H1 (cell line): ENCODE measurements at regions of chr7 and their contacts with region 1.

Region 1: DNA sequence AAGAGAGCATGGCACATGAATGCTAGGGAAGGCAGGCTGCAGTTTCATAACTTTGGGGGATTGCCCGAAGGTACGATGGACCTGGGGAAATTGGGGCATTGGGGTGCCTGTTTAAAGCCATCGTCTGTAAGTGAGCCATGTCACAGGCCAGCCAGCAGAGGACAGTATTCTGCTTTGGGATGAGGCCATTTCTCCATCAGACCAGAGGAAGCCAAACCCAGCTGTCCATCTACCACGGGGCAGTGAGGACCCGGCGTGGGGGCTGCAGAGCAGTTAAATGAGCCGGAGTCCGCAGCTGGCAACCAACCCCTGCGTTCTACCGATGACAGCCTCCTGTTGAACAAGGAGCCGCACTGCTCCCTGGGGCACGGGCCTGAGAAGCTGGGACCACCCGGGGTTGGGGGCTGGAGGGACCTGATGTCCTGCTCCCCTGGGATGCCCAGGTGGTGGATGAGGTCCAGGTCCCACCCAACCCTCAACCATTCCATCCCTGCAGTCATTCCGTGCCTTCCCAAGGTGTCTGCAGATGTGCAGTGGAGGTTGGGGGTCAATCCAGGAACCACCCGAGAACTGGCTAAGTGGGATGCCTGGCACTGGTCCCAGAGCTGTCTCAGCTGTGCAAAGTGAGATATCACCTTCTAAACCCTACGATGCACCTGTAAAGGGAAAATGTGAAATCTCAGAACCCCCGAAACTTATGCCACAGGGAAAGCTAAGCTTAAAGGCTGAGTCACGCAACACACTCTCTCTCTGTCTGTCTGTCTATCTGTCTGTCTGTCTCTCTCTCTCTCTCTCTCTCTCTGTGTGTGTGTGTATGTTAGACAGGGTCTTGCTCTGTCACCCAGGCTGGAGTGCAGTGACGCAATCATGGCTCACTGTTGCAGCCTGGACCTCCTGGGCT is 12.1 kb upstream of the RHBDD2 start:
- DNase-seq: peak in 1 of 2 experiments; percentile 71
- H3K4me3 ChIP-seq: no peak overlapping the region
- H3K27ac ChIP-seq: no peak overlapping the region
- H3K4me1 ChIP-seq: peaks cover 0 to 3% (median 2%) of the 10 kb centered on the region in 4 experiments; a peak in 3 of 7 replicates
- H3K27me3 ChIP-seq: no peaks in the 10 kb centered on the region
- CTCF ChIP-seq: peak; percentile 94 to 99 (median 95)
- EP300 ChIP-seq: no peak
- POLR2A ChIP-seq: no peak
- RAD21 ChIP-seq: peak; percentile 96 to 98

Region 2: DNA sequence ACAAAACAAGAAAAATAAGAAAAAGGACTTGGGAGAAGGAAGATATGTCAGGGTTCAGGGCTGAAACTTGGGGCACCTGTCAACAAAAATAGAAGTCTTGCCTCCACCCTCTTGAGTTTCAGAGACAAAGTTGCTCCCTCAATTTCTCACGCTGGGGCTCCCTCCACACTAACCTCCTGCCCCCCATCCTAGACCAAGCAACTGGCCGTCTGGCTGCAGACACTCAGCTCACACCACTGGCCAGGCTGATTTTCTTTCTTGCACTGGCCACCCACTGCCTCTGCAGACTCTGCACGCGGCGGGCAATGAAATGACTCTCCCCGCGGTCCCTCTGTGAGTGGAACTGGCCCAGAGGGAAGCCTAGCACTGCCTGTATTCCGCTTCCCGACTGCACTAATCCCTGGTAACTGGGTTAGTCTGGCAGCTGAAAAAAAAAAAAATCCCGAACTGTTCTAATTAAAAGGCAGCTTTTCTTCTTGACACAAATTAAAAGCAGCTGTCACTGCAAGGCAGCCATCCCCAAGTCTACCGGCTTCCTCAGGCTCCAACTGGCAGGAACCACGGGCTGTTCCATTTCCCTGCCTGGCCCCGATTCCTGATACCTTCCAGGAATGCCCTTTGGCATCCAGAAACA is 291.1 kb before region 1 on chr7:
- CTCF ChIA-PET with region 1: no interaction called
- POLR2A ChIA-PET with region 1: no interaction called
- DNase-seq: no peak
- H3K4me3 ChIP-seq: no peak overlapping the region
- H3K27ac ChIP-seq: no peak overlapping the region
- H3K4me1 ChIP-seq: no peaks in the 10 kb centered on the region
- H3K27me3 ChIP-seq: no peaks in the 10 kb centered on the region
- CTCF ChIP-seq: no peak
- EP300 ChIP-seq: no peak
- POLR2A ChIP-seq: no peak
- RAD21 ChIP-seq: no peak

Region 3: DNA sequence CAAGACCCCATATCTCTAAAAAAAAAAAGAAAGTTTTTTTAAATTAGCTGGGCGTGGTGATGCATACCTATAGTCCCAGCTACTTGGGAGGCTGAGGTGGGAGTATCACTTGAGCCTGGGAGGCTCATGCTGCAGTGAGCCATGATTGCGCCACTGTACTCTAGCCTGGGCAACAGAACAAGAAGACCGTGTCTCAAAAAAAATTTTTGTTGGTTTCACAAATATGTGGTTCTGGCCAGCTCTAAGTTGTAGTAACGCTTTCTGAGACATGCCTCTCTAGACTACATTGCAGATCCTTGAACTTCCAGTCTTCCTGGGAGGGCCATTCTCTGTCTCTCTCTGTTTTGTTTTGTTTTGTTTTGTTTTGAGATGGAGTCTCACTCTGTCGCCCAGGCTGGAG is 12.5 kb before region 1 on chr7:
- CTCF ChIA-PET with region 1: interaction called, 16 read pairs
- POLR2A ChIA-PET with region 1: interaction called, 3 read pairs
- DNase-seq: no peak
- H3K4me3 ChIP-seq: no peak overlapping the region
- H3K27ac ChIP-seq: no peak overlapping the region
- H3K4me1 ChIP-seq: no peaks in the 10 kb centered on the region
- H3K27me3 ChIP-seq: no peaks in the 10 kb centered on the region
- CTCF ChIP-seq: no peak
- EP300 ChIP-seq: no peak
- POLR2A ChIP-seq: no peak
- RAD21 ChIP-seq: no peak

Region 4: DNA sequence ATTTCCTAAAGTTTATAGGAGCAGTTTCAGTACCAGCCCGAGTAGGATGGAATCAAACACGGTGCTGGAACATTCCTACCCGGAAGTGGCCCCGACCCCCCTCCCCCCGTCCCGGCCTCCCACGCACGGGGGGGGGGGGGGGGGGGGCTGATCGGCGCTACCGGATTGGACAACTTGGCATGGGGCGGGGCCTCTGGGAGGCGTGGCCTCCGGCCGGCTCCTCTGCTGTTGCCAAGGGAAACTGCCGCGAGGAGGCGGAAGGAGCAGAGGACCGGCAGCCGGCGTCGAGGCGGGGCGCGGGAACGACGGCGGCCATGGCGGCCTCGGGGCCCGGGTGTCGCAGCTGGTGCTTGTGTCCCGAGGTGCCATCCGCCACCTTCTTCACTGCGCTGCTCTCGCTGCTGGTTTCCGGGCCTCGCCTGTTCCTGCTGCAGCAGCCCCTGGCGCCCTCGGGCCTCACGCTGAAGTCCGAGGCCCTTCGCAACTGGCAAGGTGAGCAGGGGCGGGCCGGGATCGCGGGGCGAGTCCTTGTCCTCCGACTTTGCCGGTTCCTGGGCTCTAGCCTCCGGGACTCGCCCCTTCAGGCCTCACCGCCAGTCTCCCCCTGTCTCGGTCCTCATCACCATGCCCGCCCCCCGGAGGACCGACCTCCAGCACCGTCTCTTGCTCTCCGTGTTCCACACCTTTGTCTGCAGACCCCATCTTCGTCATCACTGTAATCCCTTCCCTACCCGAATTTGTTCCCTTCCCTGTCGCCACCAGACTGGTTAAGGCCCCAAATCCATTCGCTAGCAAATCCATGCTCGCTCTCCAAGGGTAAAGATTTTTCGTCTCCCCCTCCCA is 12.3 kb after region 1 on chr7 and contains the start of gene RHBDD2:
- CTCF ChIA-PET with region 1: interaction called, 12 read pairs
- POLR2A ChIA-PET with region 1: interaction called, 4 read pairs
- DNase-seq: peak; percentile 70 to 94
- H3K4me3 ChIP-seq: peak within 1 kb of the TSS; percentile 73 to 97 (median 81)
- H3K27ac ChIP-seq: peak within 1 kb of the TSS; percentile 82
- H3K4me1 ChIP-seq: peaks cover 5 to 11% (median 9%) of the 10 kb centered on the region in 4 experiments
- H3K27me3 ChIP-seq: peaks cover 0 to 8% (median under 1%) of the 10 kb centered on the region in 4 experiments; a peak in 1 of 7 replicates
- CTCF ChIP-seq: peak in 1 of 3 experiments; percentile 13; a peak in 1 of 4 replicates
- EP300 ChIP-seq: no peak
- POLR2A ChIP-seq: peak; percentile 93 to 99
- RAD21 ChIP-seq: no peak
- total RNA-seq, gene RHBDD2: 28.3 and 29.5 TPM in 2 replicates

Region 5: GRCh38 chr7:75957012-75957736 is 90.4 kb after region 1 on chr7:
- CTCF ChIA-PET with region 1: interaction called, 10 read pairs
- POLR2A ChIA-PET with region 1: no interaction called
- DNase-seq: peak in 1 of 2 experiments; percentile 68
- H3K4me3 ChIP-seq: no peak overlapping the region; a peak in 1 of 8 replicates
- H3K27ac ChIP-seq: no peak overlapping the region
- H3K4me1 ChIP-seq: peaks cover 2 to 11% (median 4%) of the 10 kb centered on the region in 4 experiments
- H3K27me3 ChIP-seq: no peaks in the 10 kb centered on the region
- CTCF ChIP-seq: no peak
- EP300 ChIP-seq: peak in 1 of 2 experiments; percentile 55; a peak in 1 of 3 replicates
- POLR2A ChIP-seq: no peak
- RAD21 ChIP-seq: no peak

Region 6: GRCh38 chr7:75966190-75966961 is 99.6 kb after region 1 on chr7:
- CTCF ChIA-PET with region 1: interaction called, 17 read pairs
- POLR2A ChIA-PET with region 1: interaction called, 6 read pairs
- DNase-seq: no peak
- H3K4me3 ChIP-seq: no peak overlapping the region
- H3K27ac ChIP-seq: no peak overlapping the region
- H3K4me1 ChIP-seq: 0 out of 7 replicates have a peak, but pooled peaks cover 0 to 2% (median 0%) of the 10 kb centered on the region in 4 experiments
- H3K27me3 ChIP-seq: no peaks in the 10 kb centered on the region
- CTCF ChIP-seq: no peak
- EP300 ChIP-seq: no peak
- POLR2A ChIP-seq: no peak
- RAD21 ChIP-seq: no peak

Region 7: GRCh38 chr7:75971961-75972763 is 105.4 kb after region 1 on chr7:
- CTCF ChIA-PET with region 1: interaction called, 17 read pairs
- POLR2A ChIA-PET with region 1: interaction called, 6 read pairs
- DNase-seq: no peak
- H3K4me3 ChIP-seq: no peak overlapping the region
- H3K27ac ChIP-seq: no peak overlapping the region
- H3K4me1 ChIP-seq: no peaks in the 10 kb centered on the region
- H3K27me3 ChIP-seq: no peaks in the 10 kb centered on the region
- CTCF ChIP-seq: peak; percentile 23 to 53 (median 46); a peak in 2 of 4 replicates
- EP300 ChIP-seq: no peak
- POLR2A ChIP-seq: no peak
- RAD21 ChIP-seq: peak; percentile 31 to 45; a peak in 3 of 4 replicates

Region 8: DNA sequence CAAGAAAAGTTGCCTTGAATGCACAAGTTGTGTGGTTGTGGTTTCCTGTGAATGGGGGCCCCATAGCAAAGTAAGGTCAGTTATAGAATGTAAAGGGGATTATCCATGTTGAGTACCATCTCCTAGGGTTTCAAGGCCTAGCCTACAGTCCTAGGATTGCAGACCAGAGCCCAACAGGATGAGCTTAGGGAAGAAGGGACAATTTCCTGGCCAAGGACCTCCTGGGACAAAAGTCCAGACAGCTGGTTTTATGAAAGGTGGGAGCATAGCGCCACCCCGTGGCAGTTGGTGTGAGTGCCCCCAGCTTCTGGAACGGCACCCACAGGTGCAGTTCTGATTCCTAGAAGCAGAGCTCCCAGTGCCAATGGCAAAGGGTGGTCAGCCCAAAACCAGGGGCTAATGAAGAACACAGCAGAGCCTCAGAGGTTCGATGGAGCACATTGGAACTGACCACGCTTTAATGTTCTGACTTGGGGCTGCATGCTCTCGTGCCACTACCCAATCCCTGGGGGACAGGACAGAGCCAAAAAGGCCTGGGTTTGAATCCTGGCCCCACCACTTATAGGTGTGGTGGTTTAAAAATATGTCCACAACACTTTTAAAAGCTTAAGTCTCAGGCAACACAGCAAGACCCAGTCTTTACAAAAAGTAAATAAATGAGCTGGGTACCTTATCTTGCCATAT is 153.4 kb after region 1 on chr7:
- CTCF ChIA-PET with region 1: interaction called, 57 read pairs
- POLR2A ChIA-PET with region 1: no interaction called
- DNase-seq: peak; percentile 38 to 90
- H3K4me3 ChIP-seq: no peak overlapping the region
- H3K27ac ChIP-seq: no peak overlapping the region
- H3K4me1 ChIP-seq: no peaks in the 10 kb centered on the region
- H3K27me3 ChIP-seq: no peaks in the 10 kb centered on the region
- CTCF ChIP-seq: peak; percentile 94 to 96 (median 94)
- EP300 ChIP-seq: no peak
- POLR2A ChIP-seq: no peak
- RAD21 ChIP-seq: peak; percentile 97 to 98